ENCODE measurements at regions of chr6 and their contacts with region 1.

Region 1: DNA sequence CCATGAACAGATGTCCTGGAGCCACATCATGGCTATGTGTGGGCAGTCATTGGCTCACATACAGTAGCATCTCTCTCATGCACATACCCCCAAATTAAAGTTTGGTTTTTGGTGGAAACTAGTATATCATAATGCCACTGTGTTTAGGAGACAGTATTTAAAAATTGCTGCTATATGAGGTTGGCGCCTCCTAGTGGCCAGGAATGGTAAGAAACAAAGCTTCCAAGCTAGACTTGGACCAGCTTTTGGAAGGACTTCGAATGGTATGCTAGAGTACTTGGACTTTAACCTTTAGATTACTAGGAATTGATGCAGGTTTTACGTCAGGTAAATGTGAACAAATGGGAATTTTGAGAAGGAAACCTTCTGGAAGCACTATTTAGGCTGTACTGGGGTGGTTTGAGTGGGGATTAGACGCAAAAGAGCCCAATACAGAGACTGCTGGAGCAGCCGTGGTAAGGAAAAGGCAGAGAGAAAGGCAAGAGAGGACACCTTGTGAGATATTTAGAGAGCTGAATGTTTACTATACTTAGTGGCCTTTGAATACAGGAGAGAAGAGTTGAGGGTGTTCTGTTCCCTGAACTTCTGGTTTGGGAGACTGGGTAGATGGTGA is 23.8 kb downstream of the PRSS35 start:
- DNase-seq: peak; percentile 74
- ATAC-seq: peak; percentile 84
- H3K4me3 Mint-ChIP-seq: no peak overlapping the region
- H3K27ac Mint-ChIP-seq: no peak overlapping the region
- H3K4me1 Mint-ChIP-seq: no peaks in the 10 kb centered on the region
- H3K27me3 Mint-ChIP-seq: peaks cover 3% of the 10 kb centered on the region
- CTCF ChIP-seq: peak; percentile 68

Region 2: DNA sequence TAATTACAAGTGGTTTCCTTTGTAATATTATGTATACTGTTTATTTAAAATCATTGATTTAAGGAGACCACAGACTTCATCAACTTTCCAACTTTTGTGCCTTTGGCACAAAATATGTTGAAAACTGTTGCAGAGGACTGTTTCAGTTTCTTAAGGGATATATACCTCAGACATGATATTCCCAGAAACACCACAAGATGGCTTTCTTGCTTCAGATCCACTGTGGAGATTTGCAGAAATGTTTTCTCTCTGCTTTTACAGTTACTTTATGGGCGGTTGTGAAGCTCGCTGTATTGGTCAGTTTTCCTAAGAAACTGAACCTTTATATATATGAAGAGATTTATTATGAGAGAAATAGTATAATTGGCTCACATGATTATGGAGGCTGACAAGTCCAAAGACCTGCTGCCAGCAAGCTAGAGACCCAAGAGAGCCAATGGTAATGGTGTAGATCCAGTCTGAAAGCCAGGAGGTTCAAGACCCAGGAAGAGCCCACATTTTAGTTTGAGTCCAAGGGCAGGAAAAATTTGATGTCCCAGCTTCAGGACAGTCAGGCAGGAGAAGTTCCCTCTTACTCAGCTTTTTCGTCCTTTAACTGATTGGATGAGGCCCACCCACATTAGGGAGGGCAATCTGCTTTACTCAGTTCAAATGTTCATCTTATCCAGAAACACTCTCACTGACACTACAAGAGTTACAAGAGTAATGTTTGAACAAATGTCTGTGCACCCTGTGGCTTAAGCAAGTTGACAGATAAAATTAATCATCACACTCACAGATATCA is 118.1 kb before region 1 on chr6:
- CTCF ChIA-PET with region 1: interaction called, 10 read pairs
- POLR2A ChIA-PET with region 1: no interaction called
- DNase-seq: no peak
- ATAC-seq: peak; percentile 75
- H3K4me3 Mint-ChIP-seq: no peak overlapping the region
- H3K27ac Mint-ChIP-seq: no peak overlapping the region
- H3K4me1 Mint-ChIP-seq: peaks cover 3% of the 10 kb centered on the region; the same call in 1 of the 2 replicates
- H3K27me3 Mint-ChIP-seq: no peaks in the 10 kb centered on the region
- CTCF ChIP-seq: no peak; the same call in 1 of the 2 replicates

Region 3: GRCh38 chr6:83546636-83547035 is 10.5 kb after region 1 on chr6:
- CTCF ChIA-PET with region 1: interaction called, 16 read pairs
- POLR2A ChIA-PET with region 1: no interaction called
- DNase-seq: no peak
- ATAC-seq: peak; percentile 43; the same call in 1 of the 2 replicates
- H3K4me3 Mint-ChIP-seq: no peak overlapping the region
- H3K27ac Mint-ChIP-seq: no peak overlapping the region
- H3K4me1 Mint-ChIP-seq: peaks cover 6% of the 10 kb centered on the region
- H3K27me3 Mint-ChIP-seq: no peaks in the 10 kb centered on the region; the same call in 1 of the 2 replicates
- CTCF ChIP-seq: no peak

Region 4: DNA sequence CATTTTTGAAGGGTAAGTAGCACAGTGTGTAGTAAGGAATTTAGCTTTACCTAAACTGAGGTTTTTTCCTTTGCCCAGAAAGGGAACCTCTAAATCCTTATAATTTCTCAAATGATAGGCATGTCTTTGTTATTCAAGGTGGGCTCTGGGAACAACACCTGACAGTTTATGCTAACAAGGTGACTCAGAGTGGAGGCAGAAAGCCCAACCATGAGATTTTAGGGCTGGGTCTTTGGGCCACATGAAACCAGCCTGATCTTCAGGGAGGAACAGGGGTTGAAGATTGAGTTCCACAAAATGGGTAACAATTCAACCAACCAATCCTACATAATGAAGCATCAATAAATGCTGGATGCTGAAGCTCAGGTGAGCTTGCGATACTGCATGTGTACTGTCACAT is 22.8 kb after region 1 on chr6:
- CTCF ChIA-PET with region 1: interaction called, 10 read pairs
- POLR2A ChIA-PET with region 1: no interaction called
- DNase-seq: no peak
- ATAC-seq: peak; percentile 41; the same call in 1 of the 2 replicates
- H3K4me3 Mint-ChIP-seq: no peak overlapping the region
- H3K27ac Mint-ChIP-seq: no peak overlapping the region
- H3K4me1 Mint-ChIP-seq: peaks cover 14% of the 10 kb centered on the region; the same call in 1 of the 2 replicates
- H3K27me3 Mint-ChIP-seq: no peaks in the 10 kb centered on the region
- CTCF ChIP-seq: no peak

Region 5: DNA sequence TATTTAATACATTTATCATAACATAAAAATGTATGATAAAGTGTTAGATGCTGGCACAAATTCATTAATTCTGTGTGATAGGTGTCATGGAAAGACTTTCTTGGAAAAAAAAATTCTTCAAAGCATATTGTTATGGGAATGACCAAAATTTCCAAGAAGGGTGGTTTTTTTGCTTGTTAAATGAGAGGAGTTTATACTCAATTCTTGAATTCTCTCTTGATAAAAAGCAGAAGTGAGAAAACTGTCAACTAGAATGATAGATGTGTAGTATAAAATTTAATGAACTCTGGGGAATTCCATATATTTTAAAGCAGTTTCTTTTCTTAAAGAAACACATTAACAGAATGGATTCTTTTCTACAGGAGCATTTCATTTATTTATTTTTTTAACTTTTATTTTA is 234.8 kb after region 1 on chr6:
- CTCF ChIA-PET with region 1: no interaction called
- POLR2A ChIA-PET with region 1: no interaction called
- DNase-seq: no peak
- ATAC-seq: no peak
- H3K4me3 Mint-ChIP-seq: no peak overlapping the region
- H3K27ac Mint-ChIP-seq: no peak overlapping the region
- H3K4me1 Mint-ChIP-seq: no peaks in the 10 kb centered on the region
- H3K27me3 Mint-ChIP-seq: no peaks in the 10 kb centered on the region
- CTCF ChIP-seq: no peak

Measured in WTC11 (cell line).